Naive thymus-derived CD8-positive, alpha-beta T cell (primary cell): ENCODE measurements at regions of chr1 and their contacts with region 1.

Region 1: DNA sequence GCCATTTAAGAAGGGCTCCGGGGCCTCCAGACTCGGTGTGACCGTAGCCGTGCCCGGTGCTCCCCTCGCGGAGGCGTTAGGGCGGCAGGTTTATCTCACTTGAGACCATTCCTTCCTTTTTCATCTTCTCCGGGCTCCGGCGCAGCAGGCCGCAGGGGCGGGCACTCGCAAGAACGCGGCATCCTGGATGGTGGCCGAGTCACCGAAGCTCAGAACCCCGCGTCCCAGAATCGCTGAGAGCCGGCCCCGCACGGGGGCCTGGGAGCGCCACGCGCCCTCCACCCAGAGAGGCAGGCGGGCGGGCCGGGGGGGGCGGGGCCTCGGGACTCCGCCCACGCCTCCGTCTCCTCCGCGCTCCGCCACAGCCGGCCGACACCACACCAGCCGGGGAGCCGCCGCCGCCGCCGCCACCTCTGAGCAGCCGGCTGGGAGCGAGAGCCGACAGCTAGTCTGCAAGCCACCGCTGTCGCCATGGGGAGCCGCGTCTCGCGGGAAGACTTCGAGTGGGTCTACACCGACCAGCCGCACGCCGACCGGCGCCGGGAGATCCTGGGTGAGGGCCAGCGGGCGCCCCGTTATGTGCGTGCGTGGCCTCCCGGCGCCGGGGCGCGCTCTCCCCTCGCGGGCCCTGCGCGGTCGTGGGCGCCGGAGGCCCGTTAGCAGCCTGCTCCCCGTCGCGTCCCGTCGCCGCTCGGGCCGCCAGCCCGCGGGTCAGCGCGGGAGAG is at the start of gene DEGS1:
- DNase-seq: peak; percentile 77 to 88 (median 82)
- ATAC-seq: peak; percentile 77 to 84
- H3K4me3 Mint-ChIP-seq: peak within 1 kb of the TSS; percentile 84 to 96 (median 93)
- H3K27ac Mint-ChIP-seq: peak within 1 kb of the TSS; percentile 89 to 99 (median 96)
- H3K4me1 Mint-ChIP-seq: peaks cover 17 to 56% (median 44%) of the 10 kb centered on the region in 4 donors
- H3K27me3 Mint-ChIP-seq: no peaks in the 10 kb centered on the region
- polyA plus RNA-seq, gene DEGS1: 49.0 to 77.9 (median 63.4) TPM

Region 2: DNA sequence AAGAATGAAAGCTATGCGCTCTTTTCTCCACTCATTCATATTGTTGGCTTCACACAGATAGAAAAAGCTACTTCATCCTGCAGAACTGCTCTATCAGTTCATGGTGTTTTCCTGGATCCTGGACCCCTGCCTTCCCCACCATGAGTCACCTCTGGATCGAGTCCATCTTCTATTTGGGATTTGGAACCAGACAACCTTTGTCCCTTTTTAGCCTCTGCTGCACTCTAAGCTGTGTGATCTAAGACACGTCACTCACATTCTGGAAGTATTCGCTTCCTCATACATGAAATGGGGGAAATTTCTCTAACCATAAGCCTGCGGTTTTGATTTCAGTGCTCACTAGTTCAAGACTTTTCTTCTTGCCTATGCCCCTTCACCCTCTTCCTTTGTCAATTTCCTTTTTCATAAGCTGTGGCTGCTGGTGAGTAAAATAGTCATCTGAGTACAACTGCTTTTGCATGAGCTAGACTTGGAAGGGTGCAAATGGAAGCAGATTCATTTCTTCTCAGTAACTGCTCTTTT is 14.1 kb before region 1 on chr1:
- POLR2A ChIA-PET with region 1: interaction called, 19 read pairs
- DNase-seq: peak in 8 of 10 donors; percentile 22 to 79 (median 38)
- ATAC-seq: peak; percentile 94
- H3K4me3 Mint-ChIP-seq: peak overlapping the region; percentile 17 to 69 (median 57)
- H3K27ac Mint-ChIP-seq: peak overlapping the region in 9 of 10 donors; percentile 13 to 89 (median 61)
- H3K4me1 Mint-ChIP-seq: peaks cover 19 to 36% (median 32%) of the 10 kb centered on the region in 4 donors
- H3K27me3 Mint-ChIP-seq: no peaks in the 10 kb centered on the region

Region 3: DNA sequence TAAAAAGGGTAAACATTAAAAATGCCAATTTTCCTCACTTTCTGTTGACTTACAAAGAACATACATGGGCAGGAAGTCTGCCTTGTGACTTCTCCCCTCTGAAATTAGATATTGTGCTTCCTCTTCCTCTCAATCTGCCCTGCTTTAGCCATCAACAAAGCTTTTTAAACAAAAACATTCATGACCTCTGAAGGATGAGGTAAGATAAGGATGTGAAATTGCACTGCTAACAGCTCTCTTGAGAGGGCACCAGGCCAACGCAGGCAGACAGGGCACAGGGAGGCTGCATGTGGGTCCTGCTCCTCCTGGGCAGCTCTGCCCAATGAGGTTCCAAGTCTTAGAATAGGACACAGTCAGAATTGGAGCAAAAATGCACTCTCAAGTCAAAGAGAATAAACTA is 62.2 kb after region 1 on chr1:
- POLR2A ChIA-PET with region 1: interaction called, 19 read pairs
- DNase-seq: peak in 7 of 10 donors; percentile 4 to 52 (median 22)
- ATAC-seq: peak; percentile 91 to 92
- H3K4me3 Mint-ChIP-seq: peak overlapping the region; percentile 23 to 76 (median 61)
- H3K27ac Mint-ChIP-seq: peak overlapping the region; percentile 46 to 98 (median 91)
- H3K4me1 Mint-ChIP-seq: peaks cover 6 to 31% (median 17%) of the 10 kb centered on the region in 4 donors
- H3K27me3 Mint-ChIP-seq: no peaks in the 10 kb centered on the region

Region 4: GRCh38 chr1:224434691-224435317 is 251.8 kb after region 1 on chr1 and contains the start of gene WDR26:
- POLR2A ChIA-PET with region 1: interaction called, 11 read pairs
- DNase-seq: peak; percentile 65 to 94 (median 85)
- ATAC-seq: peak; percentile 85 to 88
- H3K4me3 Mint-ChIP-seq: peak within 1 kb of the TSS; percentile 80 to 99 (median 96)
- H3K27ac Mint-ChIP-seq: peak within 1 kb of the TSS; percentile 80 to 99 (median 97)
- H3K4me1 Mint-ChIP-seq: peaks cover 18 to 56% (median 55%) of the 10 kb centered on the region in 4 donors
- H3K27me3 Mint-ChIP-seq: no peaks in the 10 kb centered on the region
- polyA plus RNA-seq, gene WDR26: 2.7 to 3.8 (median 2.8) TPM